CD8-positive, alpha-beta memory T cell (primary cell): ENCODE measurements at regions of chr6 and their contacts with region 1.

Region 1: DNA sequence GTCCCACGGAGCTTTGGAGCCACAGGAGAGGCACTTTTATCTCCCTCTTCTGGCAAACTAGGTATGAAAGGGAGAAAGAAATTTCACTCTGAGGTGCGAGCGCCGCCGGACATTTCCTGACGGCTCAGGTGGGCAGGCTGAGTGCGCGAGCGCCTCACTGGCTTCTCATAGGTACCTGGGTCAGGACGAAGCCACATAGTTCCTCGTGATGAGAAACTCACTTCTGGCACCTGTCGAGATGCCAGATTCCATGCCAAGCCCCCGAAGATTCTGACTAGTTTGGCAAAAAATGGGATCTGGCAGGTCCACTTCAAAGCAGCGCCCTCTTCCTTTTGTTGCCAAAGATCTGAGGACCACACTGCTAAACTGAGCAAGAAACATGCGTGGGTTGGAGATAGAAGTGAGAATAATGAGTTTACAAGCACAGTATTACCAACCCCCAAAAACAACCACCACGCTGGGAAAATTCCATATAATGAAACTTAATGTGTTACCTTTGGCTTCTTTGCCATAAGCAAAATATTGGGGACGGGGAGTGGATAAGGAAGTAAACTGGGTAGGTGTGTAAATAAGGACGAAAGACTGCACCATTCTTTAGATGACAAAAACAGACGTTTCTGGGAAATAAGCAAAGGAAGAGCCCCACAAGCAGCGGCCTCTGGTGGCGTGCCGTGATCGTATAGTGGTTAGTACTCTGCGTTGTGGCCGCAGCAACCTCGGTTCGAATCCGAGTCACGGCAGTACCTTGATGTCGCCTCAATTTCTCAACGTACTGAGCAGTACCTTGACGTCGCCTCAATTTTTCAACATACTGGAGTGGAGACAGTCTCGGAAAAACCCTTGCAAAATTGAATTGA is 89.8 kb upstream of the PRSS16 start:
- DNase-seq: peak; percentile 71 to 88 (median 76)
- H3K4me3 ChIP-seq: peak overlapping the region; percentile 75
- H3K4me3 Mint-ChIP-seq: peak overlapping the region; percentile 79 to 93 (median 84)
- H3K27ac ChIP-seq: peak overlapping the region; percentile 51
- H3K27ac Mint-ChIP-seq: peak overlapping the region; percentile 52 to 90 (median 78)
- H3K4me1 ChIP-seq: peaks cover 15% of the 10 kb centered on the region
- H3K4me1 Mint-ChIP-seq: peaks cover 31 to 44% (median 39%) of the 10 kb centered on the region in 3 donors
- H3K27me3 ChIP-seq: no peaks in the 10 kb centered on the region
- H3K27me3 Mint-ChIP-seq: no peaks in the 10 kb centered on the region

Region 2: DNA sequence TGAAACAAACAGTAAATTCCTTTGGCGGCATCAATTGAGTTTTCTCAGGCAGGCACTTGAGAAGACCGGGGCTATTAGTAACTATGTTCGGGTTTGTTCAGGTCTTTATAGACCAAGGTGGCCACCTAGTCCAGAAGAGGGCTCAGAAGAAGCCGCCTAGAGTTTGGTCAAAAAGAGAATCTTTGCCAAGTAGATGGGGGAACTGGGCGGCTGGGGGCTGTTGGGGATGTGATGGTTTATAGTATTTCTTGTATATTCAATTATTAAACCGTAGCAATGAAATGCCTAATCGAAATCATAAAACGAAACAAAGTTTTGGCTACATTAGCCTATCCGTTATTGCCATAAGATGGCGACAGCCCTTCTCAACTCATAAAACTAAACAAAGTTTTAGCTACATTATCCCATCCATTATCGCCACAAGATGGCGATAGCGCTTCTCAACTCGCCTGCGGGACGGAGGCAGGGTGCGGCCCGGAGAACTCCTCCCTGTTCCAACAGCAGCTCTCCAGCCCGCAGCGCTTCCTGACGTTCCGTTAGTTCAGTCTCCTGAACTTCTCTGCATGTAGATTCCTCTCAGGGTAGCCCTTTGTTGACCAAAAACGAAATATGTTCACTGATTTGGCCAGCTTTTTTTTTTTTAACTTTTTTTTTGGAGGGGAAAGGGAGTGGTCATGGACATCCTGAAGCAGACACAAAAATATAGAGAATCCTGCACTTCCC is 30.7 kb before region 1 on chr6:
- CTCF ChIA-PET with region 1: interaction called, 35 read pairs
- POLR2A ChIA-PET with region 1: interaction called, 26 read pairs
- DNase-seq: peak; percentile 71 to 87 (median 77)
- H3K4me3 ChIP-seq: peak overlapping the region; percentile 54
- H3K4me3 Mint-ChIP-seq: peak overlapping the region; percentile 69 to 80 (median 77)
- H3K27ac ChIP-seq: peak overlapping the region; percentile 89
- H3K27ac Mint-ChIP-seq: peak overlapping the region; percentile 21 to 90 (median 86)
- H3K4me1 ChIP-seq: peaks cover 15% of the 10 kb centered on the region
- H3K4me1 Mint-ChIP-seq: peaks cover 16 to 21% (median 18%) of the 10 kb centered on the region in 3 donors
- H3K27me3 ChIP-seq: no peaks in the 10 kb centered on the region
- H3K27me3 Mint-ChIP-seq: no peaks in the 10 kb centered on the region

Region 3: DNA sequence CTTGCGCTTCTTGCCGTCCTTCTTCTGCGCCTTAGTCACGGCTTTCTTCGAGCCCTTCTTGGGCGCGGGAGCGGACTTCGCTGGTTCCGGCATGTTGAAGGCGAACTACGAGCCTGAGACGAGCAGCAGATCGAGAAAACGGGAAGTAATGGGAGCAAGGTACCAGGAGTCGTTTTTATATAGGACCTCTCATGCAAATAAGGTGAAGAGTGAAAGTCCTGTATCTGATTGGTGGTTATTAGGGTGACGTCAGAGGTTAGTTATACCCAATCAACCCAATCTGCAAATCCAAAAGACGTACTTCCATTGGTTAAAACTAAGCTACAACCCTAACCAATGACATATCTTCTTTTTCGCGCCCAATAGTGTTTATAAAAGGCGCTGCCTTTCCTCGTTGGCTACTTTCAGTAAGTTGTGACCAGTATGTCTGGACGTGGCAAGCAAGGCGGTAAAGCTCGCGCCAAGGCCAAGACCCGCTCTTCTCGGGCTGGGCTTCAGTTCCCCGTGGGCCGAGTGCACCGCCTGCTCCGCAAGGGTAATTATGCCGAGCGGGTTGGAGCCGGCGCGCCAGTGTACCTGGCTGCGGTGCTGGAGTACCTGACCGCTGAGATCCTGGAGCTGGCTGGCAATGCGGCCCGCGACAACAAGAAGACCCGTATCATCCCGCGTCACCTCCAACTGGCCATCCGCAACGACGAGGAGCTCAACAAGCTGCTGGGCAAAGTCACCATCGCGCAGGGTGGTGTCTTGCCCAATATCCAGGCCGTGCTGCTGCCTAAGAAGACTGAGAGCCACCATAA is 10.8 kb before region 1 on chr6:
- CTCF ChIA-PET with region 1: interaction called, 4 read pairs
- POLR2A ChIA-PET with region 1: interaction called, 21 read pairs
- DNase-seq: peak; percentile 42 to 93 (median 89)
- H3K4me3 ChIP-seq: peak overlapping the region; percentile 97
- H3K4me3 Mint-ChIP-seq: no peak overlapping the region
- H3K27ac ChIP-seq: peak overlapping the region; percentile 91
- H3K27ac Mint-ChIP-seq: no peak overlapping the region
- H3K4me1 ChIP-seq: peaks cover 20% of the 10 kb centered on the region
- H3K4me1 Mint-ChIP-seq: peaks cover 7 to 21% (median 10%) of the 10 kb centered on the region in 3 donors
- H3K27me3 ChIP-seq: no peaks in the 10 kb centered on the region
- H3K27me3 Mint-ChIP-seq: no peaks in the 10 kb centered on the region

Region 4: DNA sequence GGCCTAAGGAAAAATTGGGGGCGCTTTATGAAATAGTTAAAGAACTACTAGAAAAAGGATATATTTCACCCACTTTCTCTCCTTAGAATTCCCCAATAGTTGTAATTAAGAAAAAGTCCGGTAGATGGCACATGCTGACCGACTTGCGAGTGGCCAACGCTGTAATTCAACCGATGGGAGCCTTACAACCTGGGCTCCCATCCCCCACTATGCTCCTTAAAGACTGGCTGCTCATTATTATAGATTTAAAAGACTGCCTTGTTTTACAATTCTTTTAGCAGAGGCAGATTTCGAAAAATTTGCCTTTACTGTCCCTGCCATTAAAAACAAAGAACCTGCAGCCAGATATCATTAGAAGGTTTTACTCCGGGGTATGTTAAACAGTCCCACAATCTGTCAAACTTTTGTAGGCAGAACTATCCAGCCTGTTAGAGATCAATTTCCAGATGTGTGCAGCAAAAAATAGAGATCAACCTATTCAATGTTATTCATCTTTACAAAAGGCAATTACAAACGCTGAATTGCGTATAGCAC is 31.3 kb after region 1 on chr6:
- CTCF ChIA-PET with region 1: no interaction called
- POLR2A ChIA-PET with region 1: no interaction called
- DNase-seq: peak; percentile 23 to 68 (median 60)
- H3K4me3 ChIP-seq: peak overlapping the region; percentile 80
- H3K4me3 Mint-ChIP-seq: peak overlapping the region; percentile 85 to 94 (median 93)
- H3K27ac ChIP-seq: peak overlapping the region; percentile 83
- H3K27ac Mint-ChIP-seq: peak overlapping the region in 7 of 8 donors; percentile 48 to 93 (median 83)
- H3K4me1 ChIP-seq: no peaks in the 10 kb centered on the region
- H3K4me1 Mint-ChIP-seq: peaks cover 10 to 17% (median 13%) of the 10 kb centered on the region in 3 donors
- H3K27me3 ChIP-seq: no peaks in the 10 kb centered on the region
- H3K27me3 Mint-ChIP-seq: peaks cover 0 to 3% of the 10 kb centered on the region in 2 donors

Region 5: GRCh38 chr6:27205375-27206278 is 47.9 kb after region 1 on chr6:
- CTCF ChIA-PET with region 1: no interaction called
- POLR2A ChIA-PET with region 1: no interaction called
- DNase-seq: peak in 1 of 5 donors; percentile 7
- H3K4me3 ChIP-seq: no peak overlapping the region
- H3K4me3 Mint-ChIP-seq: peak overlapping the region in 5 of 7 donors; percentile 12 to 61 (median 34)
- H3K27ac ChIP-seq: no peak overlapping the region
- H3K27ac Mint-ChIP-seq: peak overlapping the region in 1 of 8 donors; percentile 24
- H3K4me1 ChIP-seq: no peaks in the 10 kb centered on the region
- H3K4me1 Mint-ChIP-seq: peaks cover 7 to 12% (median 7%) of the 10 kb centered on the region in 3 donors
- H3K27me3 ChIP-seq: peaks cover 14% of the 10 kb centered on the region
- H3K27me3 Mint-ChIP-seq: peaks cover 50 to 78% of the 10 kb centered on the region in 2 donors

Region 6: DNA sequence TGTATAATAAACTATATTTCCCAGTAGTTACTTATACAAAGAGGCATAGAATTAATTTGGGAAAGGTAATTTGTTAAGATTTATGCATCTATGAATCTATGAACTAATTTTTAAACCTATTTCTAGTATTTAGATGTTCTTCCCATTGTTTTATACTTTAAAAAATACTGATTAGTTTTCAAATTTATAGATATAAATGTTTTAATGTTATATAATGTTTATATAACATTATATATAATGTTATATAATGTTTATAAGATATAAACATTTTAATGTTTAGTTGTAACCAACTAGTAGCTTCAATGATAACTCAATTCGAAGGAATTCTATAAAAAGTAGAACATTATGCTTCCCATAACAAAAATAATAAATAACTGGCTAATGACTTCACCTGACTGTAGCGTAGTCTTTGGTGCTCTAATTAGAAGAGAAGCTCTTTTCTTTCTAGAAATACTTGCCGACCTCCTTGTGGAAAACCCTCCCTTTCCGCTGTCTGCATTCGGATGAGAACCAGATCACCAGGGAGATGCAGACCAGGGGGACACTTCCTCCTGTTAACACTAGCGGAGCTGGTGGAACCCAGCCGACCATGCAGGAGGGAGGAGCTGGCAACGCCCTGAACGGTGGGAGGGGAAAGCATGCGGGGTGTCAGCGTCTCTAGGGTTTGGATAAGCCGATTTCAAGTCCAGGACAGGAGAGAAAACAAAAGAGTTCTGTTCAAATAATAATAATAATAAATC is 596.2 kb after region 1 on chr6:
- CTCF ChIA-PET with region 1: interaction called, 11 read pairs
- POLR2A ChIA-PET with region 1: no interaction called
- DNase-seq: peak; percentile 27 to 63 (median 47)
- H3K4me3 ChIP-seq: peak overlapping the region; percentile 71
- H3K4me3 Mint-ChIP-seq: peak overlapping the region; percentile 84 to 97 (median 86)
- H3K27ac ChIP-seq: peak overlapping the region; percentile 39
- H3K27ac Mint-ChIP-seq: peak overlapping the region; percentile 33 to 99 (median 76)
- H3K4me1 ChIP-seq: peaks cover 19% of the 10 kb centered on the region
- H3K4me1 Mint-ChIP-seq: peaks cover 25 to 38% (median 32%) of the 10 kb centered on the region in 3 donors
- H3K27me3 ChIP-seq: no peaks in the 10 kb centered on the region
- H3K27me3 Mint-ChIP-seq: peaks cover 0 to 10% of the 10 kb centered on the region in 2 donors

Region 7: GRCh38 chr6:28981833-28982475 is 1824.3 kb after region 1 on chr6:
- CTCF ChIA-PET with region 1: no interaction called
- POLR2A ChIA-PET with region 1: interaction called, 12 read pairs
- DNase-seq: peak; percentile 53 to 87 (median 81)
- H3K4me3 ChIP-seq: peak overlapping the region; percentile 99
- H3K4me3 Mint-ChIP-seq: peak overlapping the region; percentile 92 to 97 (median 95)
- H3K27ac ChIP-seq: peak overlapping the region; percentile 77
- H3K27ac Mint-ChIP-seq: peak overlapping the region; percentile 85 to 98 (median 94)
- H3K4me1 ChIP-seq: peaks cover 31% of the 10 kb centered on the region
- H3K4me1 Mint-ChIP-seq: peaks cover 53 to 78% (median 72%) of the 10 kb centered on the region in 3 donors
- H3K27me3 ChIP-seq: no peaks in the 10 kb centered on the region
- H3K27me3 Mint-ChIP-seq: peaks cover 43 to 49% of the 10 kb centered on the region in 2 donors